Posterior vena cava (tissue), 2 donors: ENCODE measurements at regions of chr10 and their contacts with region 1.

Region 1: GRCh38 chr10:119207367-119207668 is at the start of gene GRK5:
- DNase-seq: peak; percentile 98
- total RNA-seq, gene GRK5: 40.0 to 57.5 TPM

Region 2: GRCh38 chr10:119253433-119254174 is 46.3 kb after region 1 on chr10:
- intact Hi-C with region 1: loop called in 1 of 2 experiments (anchors 5 kb)
- DNase-seq: peak; percentile 95

Region 3: GRCh38 chr10:119315128-119316001 is 108.0 kb after region 1 on chr10:
- intact Hi-C with region 1: loop called in 1 of 2 experiments (anchors 10 kb)
- DNase-seq: peak; percentile 90